Activated T-helper 2 cell treated with anti-CD3 and anti-CD28 coated beads, Interferon-gamma antibody, Interleukin-2, Interleukin-4, amounts not matched to agents 10 μg/mL and 5 μg/mL and 100 μg/mL, durations not matched to agents 14 hours and 24 hours and 36 hours (primary cell): ENCODE measurements at regions of chr13 and their contacts with region 1.

Region 1: DNA sequence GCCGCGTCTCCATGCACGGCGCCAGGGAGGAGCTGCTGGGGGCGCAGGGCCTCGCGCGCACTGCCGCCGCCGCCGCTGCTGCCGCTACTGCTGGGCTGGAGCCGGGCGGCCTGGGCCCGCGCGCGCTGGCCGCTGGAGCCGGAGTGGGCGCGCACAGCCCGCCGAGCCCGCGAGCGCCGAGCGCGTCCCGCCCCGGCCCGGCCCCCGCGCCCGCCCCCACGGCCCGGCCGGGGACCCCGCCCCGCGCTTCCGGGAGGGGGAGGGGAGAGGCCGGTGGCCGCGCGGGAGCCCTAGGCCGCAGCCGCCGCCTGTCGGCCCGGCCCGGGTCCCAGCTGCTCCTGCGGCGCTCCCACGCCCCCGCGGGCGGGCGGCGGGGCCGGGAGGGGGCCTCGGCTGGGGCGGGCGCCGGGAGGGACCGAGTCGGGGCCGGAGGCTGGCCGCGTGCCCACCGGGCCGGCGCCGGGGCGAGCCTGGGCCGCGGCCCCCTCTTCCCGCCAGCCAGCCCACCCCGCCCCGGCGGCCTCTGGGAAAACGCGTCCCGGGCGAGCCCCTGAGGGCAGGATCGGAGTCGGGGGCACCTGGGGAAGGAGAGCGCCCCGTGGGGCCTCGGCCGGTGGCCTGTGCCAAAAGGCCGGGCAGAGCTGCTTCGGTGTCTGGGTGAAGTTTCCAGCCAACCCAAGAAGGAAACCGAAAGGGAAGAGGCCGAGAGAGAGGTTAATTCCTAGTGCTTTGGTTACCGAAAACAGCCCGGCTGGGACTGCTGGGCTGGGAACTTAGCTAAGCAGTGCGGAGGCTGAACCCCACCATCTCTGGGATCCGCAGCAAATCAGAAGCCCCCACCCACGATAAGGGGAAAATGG is at the start of gene STK24:
- DNase-seq: peak; percentile 60
- H3K4me3 Mint-ChIP-seq: peak within 1 kb of the TSS; percentile 98
- H3K27ac Mint-ChIP-seq: peak within 1 kb of the TSS; percentile 95
- H3K4me1 Mint-ChIP-seq: peaks cover 36% of the 10 kb centered on the region
- H3K27me3 Mint-ChIP-seq: no peaks in the 10 kb centered on the region
- total RNA-seq, gene STK24: 119 and 127 TPM in 2 replicates

Region 2: GRCh38 chr13:98549728-98550317 is 27.4 kb before region 1 on chr13:
- intact Hi-C with region 1: loop called (anchors 1 kb)
- DNase-seq: no peak
- H3K4me3 Mint-ChIP-seq: no peak overlapping the region
- H3K27ac Mint-ChIP-seq: peak overlapping the region; percentile 66
- H3K4me1 Mint-ChIP-seq: peaks cover 49% of the 10 kb centered on the region
- H3K27me3 Mint-ChIP-seq: no peaks in the 10 kb centered on the region

Region 3: DNA sequence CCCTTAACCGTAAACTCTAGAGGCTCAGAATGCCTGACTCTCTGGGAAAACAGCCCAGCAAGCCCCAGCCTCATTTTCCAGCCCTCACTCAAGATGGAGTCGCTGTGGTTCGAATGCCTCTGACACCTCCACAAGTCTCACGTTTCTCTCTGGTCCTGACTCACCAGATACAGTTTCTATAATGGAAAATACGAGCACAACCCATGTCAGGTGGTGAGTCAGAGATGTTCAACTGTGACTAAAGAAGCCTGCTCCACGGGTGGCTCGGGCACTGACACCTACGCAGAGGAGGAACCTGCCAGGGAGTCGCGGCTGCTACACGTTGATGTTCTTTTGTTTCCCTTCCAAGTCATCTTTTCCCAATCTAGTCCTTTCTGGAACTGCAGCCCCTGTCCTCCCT is 86.8 kb after region 1 on chr13:
- intact Hi-C with region 1: loop called (anchors 2 kb)
- DNase-seq: peak; percentile 18
- H3K4me3 Mint-ChIP-seq: no peak overlapping the region
- H3K27ac Mint-ChIP-seq: peak overlapping the region; percentile 58
- H3K4me1 Mint-ChIP-seq: peaks cover 18% of the 10 kb centered on the region
- H3K27me3 Mint-ChIP-seq: peaks cover 27% of the 10 kb centered on the region

Region 4: DNA sequence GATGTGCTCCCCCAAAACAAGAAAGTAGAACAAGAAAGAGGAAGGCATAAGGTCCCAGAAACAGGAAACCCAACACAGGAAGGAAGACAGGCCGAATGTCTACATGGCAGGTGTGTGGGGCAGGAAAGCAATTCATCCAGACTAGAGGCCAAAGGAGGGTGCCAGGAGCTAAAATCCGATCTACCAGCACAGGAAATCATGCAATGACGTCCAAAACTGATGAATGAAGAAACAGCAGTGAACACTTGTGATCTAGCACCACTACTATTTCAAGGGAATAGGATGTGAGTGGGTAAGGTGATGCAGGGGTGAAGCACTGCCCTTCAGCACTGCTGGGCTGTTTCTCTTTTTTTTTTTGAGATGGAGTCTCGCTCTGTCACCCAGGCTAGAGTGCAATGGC is 341.6 kb after region 1 on chr13:
- intact Hi-C with region 1: no loop called
- DNase-seq: no peak
- H3K4me3 Mint-ChIP-seq: no peak overlapping the region
- H3K27ac Mint-ChIP-seq: peak overlapping the region; percentile 30
- H3K4me1 Mint-ChIP-seq: peaks cover 32% of the 10 kb centered on the region
- H3K27me3 Mint-ChIP-seq: no peaks in the 10 kb centered on the region